ENCODE measurements at regions of chr9 and their contacts with region 1.

Region 1: GRCh38 chr9:68949271-68950000 is 64.5 kb downstream of the PRKACG start:
- DNase-seq: peak; percentile 79
- H3K4me3 Mint-ChIP-seq: peak overlapping the region; percentile 28
- H3K27ac Mint-ChIP-seq: peak overlapping the region; percentile 81
- H3K4me1 Mint-ChIP-seq: peaks cover 59% of the 10 kb centered on the region
- H3K27me3 Mint-ChIP-seq: no peaks in the 10 kb centered on the region

Region 2: DNA sequence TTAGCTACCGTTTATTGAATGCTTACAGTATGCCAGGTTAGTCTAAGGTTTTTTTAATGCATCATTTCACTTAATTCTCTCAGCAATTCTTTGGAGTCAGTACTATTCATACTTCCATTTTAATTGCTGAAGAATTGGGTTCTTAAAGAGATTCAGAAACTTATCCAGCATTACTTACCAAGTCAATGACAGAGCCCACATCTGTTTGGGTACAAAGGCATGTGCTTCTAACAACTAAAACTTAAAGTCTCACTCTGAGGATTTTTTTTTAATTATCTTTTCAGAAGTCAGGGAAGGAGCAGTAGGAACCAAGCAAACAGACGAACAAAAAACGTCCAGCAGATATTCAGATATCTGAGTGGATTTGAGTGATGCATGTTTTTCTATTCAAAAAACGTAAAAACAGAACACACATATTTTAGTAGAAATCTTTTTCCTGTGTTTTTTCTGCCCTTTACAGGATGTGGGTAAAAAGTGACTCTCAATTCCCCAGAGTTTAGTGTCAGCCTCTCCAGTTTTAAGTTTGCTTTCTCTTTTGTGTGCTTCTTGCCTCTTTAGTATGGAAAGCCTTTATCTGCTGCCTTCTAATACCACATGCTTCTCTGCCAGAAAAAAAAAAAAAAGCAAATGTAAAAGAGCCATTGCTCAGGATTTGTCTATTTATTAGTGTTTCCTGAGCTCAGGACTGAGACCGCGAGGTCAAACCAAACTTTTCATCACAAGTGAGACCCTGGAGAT is 53.5 kb before region 1 on chr9:
- intact Hi-C with region 1: loop called (anchors 2 kb)
- DNase-seq: peak; percentile 75
- H3K4me3 Mint-ChIP-seq: peak overlapping the region; percentile 73
- H3K27ac Mint-ChIP-seq: peak overlapping the region; percentile 82
- H3K4me1 Mint-ChIP-seq: peaks cover 46% of the 10 kb centered on the region
- H3K27me3 Mint-ChIP-seq: no peaks in the 10 kb centered on the region

Region 3: GRCh38 chr9:68919661-68920060 is 29.8 kb before region 1 on chr9:
- intact Hi-C with region 1: loop called (anchors 2 kb)
- DNase-seq: no peak
- H3K4me3 Mint-ChIP-seq: no peak overlapping the region
- H3K27ac Mint-ChIP-seq: no peak overlapping the region
- H3K4me1 Mint-ChIP-seq: peaks cover 21% of the 10 kb centered on the region
- H3K27me3 Mint-ChIP-seq: no peaks in the 10 kb centered on the region

Region 4: GRCh38 chr9:68979538-68980314 is 30.3 kb after region 1 on chr9:
- intact Hi-C with region 1: loop called (anchors 1 kb)
- DNase-seq: peak; percentile 83
- H3K4me3 Mint-ChIP-seq: peak overlapping the region; percentile 63
- H3K27ac Mint-ChIP-seq: peak overlapping the region; percentile 93
- H3K4me1 Mint-ChIP-seq: peaks cover 66% of the 10 kb centered on the region
- H3K27me3 Mint-ChIP-seq: no peaks in the 10 kb centered on the region